ENCODE measurements at regions of chr5 and their contacts with region 1.

Region 1: DNA sequence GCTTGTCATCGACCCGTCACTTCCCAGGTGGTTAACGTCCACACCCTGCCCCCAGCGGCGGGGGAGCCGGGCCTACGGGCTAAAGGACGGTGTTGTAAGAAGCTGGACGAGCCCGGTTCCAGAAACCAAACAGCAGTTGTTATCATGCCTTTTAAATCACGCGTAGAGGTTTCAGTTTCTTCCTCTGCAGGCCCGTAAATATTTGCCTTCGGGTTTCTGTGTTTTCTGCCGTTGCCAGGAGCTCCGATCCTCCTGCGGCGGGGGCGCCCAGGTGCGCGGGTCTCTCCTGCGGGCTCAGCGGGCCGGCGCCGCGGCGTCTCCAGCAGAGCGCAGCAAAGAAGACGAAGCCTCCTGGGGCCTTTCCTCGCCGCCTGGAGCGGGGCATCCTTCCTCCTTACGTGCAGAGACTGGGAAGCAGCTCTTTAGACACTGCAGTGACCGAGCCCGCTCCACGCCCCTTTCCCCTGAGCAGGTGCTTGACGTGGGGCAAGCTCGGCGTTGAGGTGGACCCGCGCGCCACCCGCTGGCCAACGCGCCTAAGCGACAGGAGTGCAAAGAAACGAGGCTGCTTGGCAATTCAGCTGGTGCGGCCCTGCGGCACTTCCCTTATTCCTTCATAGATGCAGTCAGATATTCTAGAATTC is 21.8 kb upstream of the TTC1 start:
- DNase-seq: peak; percentile 71 to 90 (median 89)
- ATAC-seq: peak; percentile 91
- H3K4me3 ChIP-seq: peak overlapping the region; percentile 44
- H3K27ac ChIP-seq: no peak overlapping the region
- H3K4me1 ChIP-seq: no peaks in the 10 kb centered on the region
- H3K27me3 ChIP-seq: no peaks in the 10 kb centered on the region

Region 2: GRCh38 chr5:159286420-159287035 is 700.6 kb before region 1 on chr5:
- intact Hi-C with region 1: loop called in 3 of 4 experiments (anchors 5 to 10 kb)
- DNase-seq: no peak
- ATAC-seq: peak; percentile 47 to 51
- H3K4me3 ChIP-seq: no peak overlapping the region
- H3K27ac ChIP-seq: no peak overlapping the region
- H3K4me1 ChIP-seq: no peaks in the 10 kb centered on the region
- H3K27me3 ChIP-seq: no peaks in the 10 kb centered on the region

Region 3: GRCh38 chr5:159331093-159331973 is 655.8 kb before region 1 on chr5:
- intact Hi-C with region 1: loop called in 1 of 4 experiments (anchors 5 kb)
- DNase-seq: peak; percentile 72 to 89 (median 87)
- ATAC-seq: peak; percentile 93 to 97
- H3K4me3 ChIP-seq: peak overlapping the region; percentile 33
- H3K27ac ChIP-seq: no peak overlapping the region
- H3K4me1 ChIP-seq: no peaks in the 10 kb centered on the region
- H3K27me3 ChIP-seq: peaks cover 2% of the 10 kb centered on the region

Measured in right cardiac atrium (tissue), 5 donors.